ENCODE measurements at regions of chr18 and their contacts with region 1.

Region 1: DNA sequence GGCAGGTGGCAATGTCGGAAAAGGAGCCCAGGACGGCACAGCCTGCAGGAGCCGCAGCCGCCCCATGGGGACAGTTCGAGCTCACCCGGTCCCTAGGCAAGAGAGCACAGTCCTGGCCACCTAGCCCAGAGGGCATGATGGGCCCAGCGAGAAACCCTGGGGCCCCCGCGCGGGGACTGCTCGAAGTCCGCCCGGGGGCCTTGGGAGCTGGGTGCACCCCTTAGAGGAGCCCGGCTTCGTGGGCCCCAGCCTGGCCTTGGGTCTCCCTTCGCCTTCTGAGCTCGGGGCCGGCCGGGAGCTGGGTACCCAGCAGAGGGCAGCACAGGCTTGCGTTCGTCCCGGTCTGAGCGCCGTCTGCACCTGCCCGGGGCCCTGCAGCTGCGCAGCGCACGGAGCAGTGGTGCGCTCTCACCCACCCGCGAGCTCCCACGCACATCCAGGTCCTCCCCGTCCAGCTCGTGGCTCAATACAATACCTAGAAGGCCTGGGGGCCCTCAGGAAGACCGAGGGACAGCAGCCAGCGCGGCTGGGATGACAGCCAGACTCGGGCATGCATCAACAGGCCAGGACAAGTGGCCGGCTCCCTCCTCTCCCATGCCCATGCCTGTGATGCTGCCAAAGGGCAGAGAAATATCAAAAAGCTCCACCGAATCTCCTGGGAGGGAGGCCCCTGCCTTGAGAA is 96.2 kb upstream of the ZNF532 start:
- DNase-seq: peak; percentile 58
- ATAC-seq: peak; percentile 83
- H3K4me3 Mint-ChIP-seq: peak overlapping the region; percentile 58
- H3K27ac Mint-ChIP-seq: no peak overlapping the region
- H3K4me1 Mint-ChIP-seq: peaks cover 7% of the 10 kb centered on the region
- H3K27me3 Mint-ChIP-seq: peaks cover 12% of the 10 kb centered on the region
- CTCF ChIP-seq: peak; percentile 18

Region 2: GRCh38 chr18:57881818-57882413 is 886.5 kb before region 1 on chr18:
- CTCF ChIA-PET with region 1: interaction called, 5 read pairs
- POLR2A ChIA-PET with region 1: no interaction called
- intact Hi-C with region 1: loop called (anchors 1 kb)
- DNase-seq: peak; percentile 37
- ATAC-seq: peak; percentile 99
- H3K4me3 Mint-ChIP-seq: no peak overlapping the region
- H3K27ac Mint-ChIP-seq: no peak overlapping the region
- H3K4me1 Mint-ChIP-seq: peaks cover 8% of the 10 kb centered on the region
- H3K27me3 Mint-ChIP-seq: no peaks in the 10 kb centered on the region
- CTCF ChIP-seq: peak; percentile 79

Region 3: DNA sequence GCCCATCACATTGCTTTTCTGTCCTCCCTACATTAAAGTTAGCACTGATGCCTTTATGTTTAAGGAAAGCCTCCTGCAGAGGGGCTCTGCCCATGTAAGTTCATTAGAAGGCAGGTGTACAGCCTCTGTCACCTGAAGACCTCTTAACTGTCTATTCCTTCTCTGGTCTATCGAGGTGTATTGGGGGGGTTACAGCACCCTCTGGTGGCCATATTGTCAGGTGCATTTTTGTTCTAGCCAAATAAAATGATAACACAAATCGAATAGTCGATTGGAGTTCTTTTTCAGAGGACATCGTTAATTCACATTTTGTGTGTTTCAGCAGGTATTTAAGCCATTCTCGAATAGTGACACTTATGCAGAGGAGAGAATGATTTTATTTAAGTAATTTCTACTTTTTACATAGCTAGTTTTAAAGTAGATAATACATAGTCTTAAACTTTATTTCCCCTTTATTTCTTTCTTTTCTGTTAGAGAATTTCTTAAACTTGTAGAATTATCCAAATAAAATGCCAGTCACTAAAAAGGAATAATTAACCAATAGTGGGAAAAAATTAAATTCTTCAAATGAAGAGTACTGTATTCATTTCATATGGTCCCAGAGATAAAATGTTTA is 587.6 kb before region 1 on chr18:
- CTCF ChIA-PET with region 1: interaction called, 13 read pairs
- POLR2A ChIA-PET with region 1: no interaction called
- intact Hi-C with region 1: loop called (anchors 1 kb)
- DNase-seq: peak; percentile 31
- ATAC-seq: peak; percentile 61
- H3K4me3 Mint-ChIP-seq: no peak overlapping the region
- H3K27ac Mint-ChIP-seq: no peak overlapping the region
- H3K4me1 Mint-ChIP-seq: peaks cover 4% of the 10 kb centered on the region
- H3K27me3 Mint-ChIP-seq: no peaks in the 10 kb centered on the region
- CTCF ChIP-seq: peak; percentile 63

Region 4: GRCh38 chr18:58400337-58400870 is 368.0 kb before region 1 on chr18:
- CTCF ChIA-PET with region 1: interaction called, 4 read pairs
- POLR2A ChIA-PET with region 1: no interaction called
- intact Hi-C with region 1: loop called (anchors 1 kb)
- DNase-seq: no peak
- ATAC-seq: no peak
- H3K4me3 Mint-ChIP-seq: no peak overlapping the region
- H3K27ac Mint-ChIP-seq: no peak overlapping the region
- H3K4me1 Mint-ChIP-seq: peaks cover 3% of the 10 kb centered on the region
- H3K27me3 Mint-ChIP-seq: no peaks in the 10 kb centered on the region
- CTCF ChIP-seq: no peak

Region 5: DNA sequence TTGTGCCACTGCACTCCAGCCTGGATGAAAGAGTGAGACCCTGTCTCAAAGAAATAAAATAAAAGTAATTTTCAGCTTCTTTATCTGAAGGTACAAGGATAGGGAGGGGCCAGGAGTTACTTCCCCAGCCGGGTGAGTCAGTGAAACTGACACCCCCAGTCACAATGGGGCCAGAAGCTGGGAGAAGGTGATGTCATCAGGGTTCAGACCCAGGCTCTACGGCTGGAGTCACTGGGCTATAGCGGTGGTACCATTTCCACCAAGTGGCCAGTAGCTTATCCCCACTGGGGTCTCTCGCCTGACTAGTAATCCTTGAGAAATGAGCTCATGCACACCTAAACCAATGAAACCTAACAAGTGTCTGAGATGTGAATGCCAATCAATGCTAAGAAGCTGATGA is 247.5 kb before region 1 on chr18:
- CTCF ChIA-PET with region 1: interaction called, 295 read pairs
- POLR2A ChIA-PET with region 1: no interaction called
- intact Hi-C with region 1: no loop called
- DNase-seq: no peak
- ATAC-seq: no peak
- H3K4me3 Mint-ChIP-seq: no peak overlapping the region
- H3K27ac Mint-ChIP-seq: no peak overlapping the region
- H3K4me1 Mint-ChIP-seq: peaks cover 13% of the 10 kb centered on the region
- H3K27me3 Mint-ChIP-seq: no peaks in the 10 kb centered on the region
- CTCF ChIP-seq: no peak

Region 6: GRCh38 chr18:58980991-58981390 is 212.6 kb after region 1 on chr18:
- CTCF ChIA-PET with region 1: no interaction called
- POLR2A ChIA-PET with region 1: no interaction called
- intact Hi-C with region 1: no loop called
- DNase-seq: no peak
- ATAC-seq: no peak
- H3K4me3 Mint-ChIP-seq: no peak overlapping the region
- H3K27ac Mint-ChIP-seq: peak overlapping the region; percentile 30
- H3K4me1 Mint-ChIP-seq: peaks cover 15% of the 10 kb centered on the region
- H3K27me3 Mint-ChIP-seq: no peaks in the 10 kb centered on the region
- CTCF ChIP-seq: no peak

Region 7: GRCh38 chr18:59070181-59070912 is 301.9 kb after region 1 on chr18:
- CTCF ChIA-PET with region 1: interaction called, 67 read pairs
- POLR2A ChIA-PET with region 1: interaction called, 3 read pairs
- intact Hi-C with region 1: loop called (anchors 1 kb)
- DNase-seq: peak; percentile 68
- ATAC-seq: peak; percentile 85
- H3K4me3 Mint-ChIP-seq: no peak overlapping the region
- H3K27ac Mint-ChIP-seq: peak overlapping the region; percentile 54
- H3K4me1 Mint-ChIP-seq: peaks cover 25% of the 10 kb centered on the region
- H3K27me3 Mint-ChIP-seq: no peaks in the 10 kb centered on the region
- CTCF ChIP-seq: peak; percentile 39